Caco-2 (cell line): ENCODE measurements at regions of chr6 and their contacts with region 1.

Region 1: DNA sequence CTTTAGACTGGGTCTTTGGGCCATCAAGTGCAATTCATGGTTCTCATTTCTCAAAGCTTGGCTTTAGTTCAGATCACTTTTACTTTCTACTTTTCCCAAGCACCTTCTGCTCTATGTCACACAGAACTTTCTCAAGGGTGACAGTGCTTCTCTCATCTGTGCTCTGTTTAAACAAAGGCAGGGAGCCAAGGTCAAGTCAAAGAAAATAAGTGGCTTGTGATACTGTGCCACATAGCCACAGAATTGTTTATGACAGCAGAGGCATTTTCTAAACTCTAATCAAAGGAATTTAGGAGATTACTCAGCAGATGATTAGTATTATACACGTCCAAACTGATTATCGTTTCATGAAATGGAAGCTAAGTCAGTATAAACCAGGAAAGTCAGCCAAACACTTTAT is 348.0 kb downstream of the HDGFL1 start:
- DNase-seq: no peak
- H3K4me3 ChIP-seq: peak overlapping the region; percentile 28
- H3K4me3 Mint-ChIP-seq: peak overlapping the region; percentile 84
- H3K27ac Mint-ChIP-seq: peak overlapping the region; percentile 34
- H3K4me1 ChIP-seq: peaks cover 10% of the 10 kb centered on the region
- H3K4me1 Mint-ChIP-seq: peaks cover 21% of the 10 kb centered on the region
- H3K27me3 ChIP-seq: no peaks in the 10 kb centered on the region
- H3K27me3 Mint-ChIP-seq: no peaks in the 10 kb centered on the region
- CTCF ChIP-seq: no peak

Region 2: GRCh38 chr6:22694092-22694724 is 223.1 kb before region 1 on chr6:
- CTCF ChIA-PET with region 1: no interaction called
- POLR2A ChIA-PET with region 1: no interaction called
- intact Hi-C with region 1: no loop called
- DNase-seq: no peak
- H3K4me3 ChIP-seq: no peak overlapping the region
- H3K4me3 Mint-ChIP-seq: no peak overlapping the region
- H3K27ac Mint-ChIP-seq: no peak overlapping the region
- H3K4me1 ChIP-seq: no peaks in the 10 kb centered on the region
- H3K4me1 Mint-ChIP-seq: no peaks in the 10 kb centered on the region
- H3K27me3 ChIP-seq: no peaks in the 10 kb centered on the region
- H3K27me3 Mint-ChIP-seq: no peaks in the 10 kb centered on the region
- CTCF ChIP-seq: no peak

Region 3: DNA sequence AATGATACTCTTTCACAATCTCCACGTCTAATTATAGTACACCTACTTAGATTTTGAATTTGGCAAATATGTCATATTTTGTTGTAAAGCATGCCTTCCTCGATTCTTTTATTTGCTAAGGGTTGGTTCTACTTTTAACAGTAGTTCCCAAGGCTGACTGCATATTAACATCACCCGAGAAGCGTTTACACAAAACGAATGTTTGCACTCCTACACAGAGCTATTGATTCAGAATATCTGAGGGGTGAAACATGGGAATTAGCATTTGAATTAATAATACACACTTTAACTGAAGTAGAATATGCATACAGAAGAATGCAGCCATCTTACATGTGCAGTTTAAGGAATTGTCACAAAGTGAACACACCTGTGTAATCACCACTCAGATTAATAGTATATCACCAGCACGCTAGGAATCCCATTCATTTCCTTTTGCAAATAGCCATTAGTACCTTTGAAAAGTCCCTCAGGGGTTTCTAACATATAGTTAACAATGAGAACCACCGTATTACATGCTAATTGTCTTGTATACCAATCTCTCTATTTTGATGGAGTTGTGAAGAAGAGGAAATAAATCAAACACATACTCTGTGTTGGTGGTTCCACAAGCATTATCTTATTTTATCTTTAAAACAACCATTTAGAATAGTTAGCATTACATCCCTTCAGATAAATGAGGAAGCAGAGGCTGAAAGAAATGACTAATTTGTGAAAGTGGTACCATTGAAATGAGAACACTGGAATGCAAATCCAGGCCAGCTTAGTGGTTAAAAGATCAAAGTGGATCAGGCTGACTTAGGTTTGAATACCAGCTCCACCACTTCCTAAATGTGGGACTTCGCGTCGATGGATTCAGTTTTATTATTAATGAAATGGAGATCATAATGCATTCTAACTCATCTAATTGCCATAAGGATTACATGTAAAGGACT is 30.4 kb before region 1 on chr6:
- CTCF ChIA-PET with region 1: no interaction called
- POLR2A ChIA-PET with region 1: no interaction called
- intact Hi-C with region 1: loop called (anchors 2 kb)
- DNase-seq: peak in 1 of 2 experiments; percentile 43
- H3K4me3 ChIP-seq: no peak overlapping the region
- H3K4me3 Mint-ChIP-seq: peak overlapping the region; percentile 47
- H3K27ac Mint-ChIP-seq: peak overlapping the region; percentile 55
- H3K4me1 ChIP-seq: peaks cover 66% of the 10 kb centered on the region
- H3K4me1 Mint-ChIP-seq: peaks cover 30% of the 10 kb centered on the region
- H3K27me3 ChIP-seq: no peaks in the 10 kb centered on the region
- H3K27me3 Mint-ChIP-seq: no peaks in the 10 kb centered on the region
- CTCF ChIP-seq: no peak